H1 (cell line): ENCODE measurements at regions of chr4 and their contacts with region 1.

Region 1: DNA sequence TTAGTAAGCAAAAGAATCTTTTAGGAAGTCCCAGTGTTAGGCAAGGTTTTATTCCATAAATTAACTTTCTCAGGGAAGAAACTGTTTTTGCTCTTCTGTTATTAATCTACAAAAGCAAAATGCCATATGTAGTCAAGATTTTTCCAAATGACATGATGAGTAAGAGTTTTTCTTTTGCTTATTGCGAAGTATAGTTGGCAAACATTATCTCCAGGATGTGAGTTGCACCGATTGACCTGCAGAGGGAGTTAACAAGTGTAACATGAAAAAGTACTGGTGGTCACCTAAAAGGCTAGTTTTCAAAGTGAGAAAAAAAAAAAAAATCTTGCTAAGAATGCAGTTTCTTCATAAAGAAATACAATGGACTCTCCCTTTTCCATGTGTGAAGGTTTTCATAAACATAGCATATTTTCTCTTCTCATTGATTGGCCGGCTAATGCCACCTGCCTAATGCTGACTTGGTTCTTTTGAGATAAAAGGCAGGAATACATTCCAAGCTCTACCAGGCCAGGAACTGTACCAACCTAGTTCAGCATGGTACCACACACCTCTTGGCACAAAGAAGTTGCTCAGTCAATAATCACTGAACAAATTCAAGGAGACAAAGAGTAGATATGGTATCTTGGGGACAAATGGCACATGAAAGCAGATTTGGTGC is 100.2 kb downstream of the LNX1 start:
- DNase-seq: no peak
- H3K4me3 ChIP-seq: no peak overlapping the region
- H3K27ac ChIP-seq: no peak overlapping the region
- H3K4me1 ChIP-seq: peaks cover 0 to 3% (median 0%) of the 10 kb centered on the region in 4 experiments; a peak in 3 of 7 replicates
- H3K27me3 ChIP-seq: no peaks in the 10 kb centered on the region
- CTCF ChIP-seq: peak in 2 of 3 experiments; percentile 31 to 62; a peak in 2 of 4 replicates
- EP300 ChIP-seq: no peak
- POLR2A ChIP-seq: no peak
- RAD21 ChIP-seq: peak; percentile 50 to 65

Region 2: DNA sequence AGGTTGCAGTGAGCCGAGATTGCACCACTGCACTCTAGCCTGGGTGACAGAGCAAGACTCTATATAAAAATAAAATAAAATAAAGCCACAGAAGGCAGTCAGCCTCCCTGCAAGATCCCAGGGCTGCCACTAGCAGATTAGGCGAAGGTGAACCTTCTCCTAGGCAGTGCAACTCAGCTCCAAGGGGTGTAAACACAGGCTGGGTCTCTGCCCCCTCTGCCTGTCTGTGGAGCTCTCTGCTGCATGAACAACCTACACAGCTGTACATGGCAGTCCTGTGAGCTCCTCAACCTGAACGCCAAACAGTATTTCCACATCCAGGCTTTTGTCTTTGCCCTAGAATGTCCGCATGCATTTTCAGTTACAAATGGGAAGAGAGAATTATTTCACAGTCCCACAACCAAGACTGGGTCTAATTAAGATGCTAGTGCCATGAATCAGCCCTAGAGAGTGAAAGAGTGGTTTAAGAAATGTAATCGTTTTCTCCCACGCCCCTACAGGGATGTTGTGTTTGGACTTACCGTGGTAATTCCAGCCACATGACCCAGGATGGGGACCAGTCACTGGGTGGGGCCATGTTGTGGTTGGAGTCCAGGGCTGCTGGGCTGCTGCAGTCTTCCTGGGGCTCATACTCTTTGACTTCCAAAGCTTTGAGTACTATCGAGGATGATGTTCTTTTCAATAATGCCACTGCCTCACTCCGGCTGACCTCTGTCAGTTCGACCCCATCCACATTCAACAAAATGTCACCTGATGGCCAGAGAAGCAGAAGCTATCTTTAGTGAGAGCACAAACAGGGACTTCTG is 14.7 kb before region 1 on chr4:
- CTCF ChIA-PET with region 1: interaction called, 42 read pairs
- POLR2A ChIA-PET with region 1: interaction called, 3 read pairs
- DNase-seq: no peak
- H3K4me3 ChIP-seq: peak overlapping the region in 3 of 4 experiments; percentile 10 to 37 (median 23); a peak in 5 of 8 replicates
- H3K27ac ChIP-seq: peak overlapping the region; percentile 65
- H3K4me1 ChIP-seq: peaks cover 2 to 27% (median 23%) of the 10 kb centered on the region in 4 experiments; a peak in 5 of 7 replicates
- H3K27me3 ChIP-seq: no peaks in the 10 kb centered on the region
- CTCF ChIP-seq: no peak
- EP300 ChIP-seq: no peak
- POLR2A ChIP-seq: no peak
- RAD21 ChIP-seq: no peak

Region 3: DNA sequence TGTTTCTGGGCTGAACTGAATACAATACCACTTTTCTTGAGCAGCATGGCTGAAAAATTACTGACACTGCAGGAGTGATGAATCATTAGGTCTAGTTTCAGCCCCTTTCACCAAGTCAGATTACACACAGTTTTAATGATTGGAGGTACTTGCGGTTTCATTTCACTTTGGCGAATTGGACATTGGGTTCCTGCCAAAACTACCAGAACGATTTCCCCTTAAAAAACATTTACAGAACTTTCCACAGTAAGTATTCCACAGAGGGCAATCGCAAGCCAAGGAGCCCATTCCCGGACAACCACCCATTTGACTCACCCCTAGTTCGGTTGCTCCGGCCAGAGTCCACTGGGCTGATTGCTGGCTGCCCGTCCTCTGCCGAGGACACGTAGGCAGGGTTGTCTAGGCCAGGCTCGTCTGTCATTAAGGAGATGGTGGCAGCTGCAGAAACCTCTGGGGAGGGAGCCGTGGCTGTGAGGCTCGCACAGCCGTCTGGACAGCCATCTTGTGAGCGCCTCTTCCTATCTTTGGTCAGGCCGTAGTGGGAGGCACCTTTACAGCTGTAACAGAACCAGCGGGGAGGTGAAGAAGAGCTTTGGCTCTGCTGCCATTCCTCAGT is 16.7 kb after region 1 on chr4:
- CTCF ChIA-PET with region 1: interaction called, 54 read pairs
- POLR2A ChIA-PET with region 1: no interaction called
- DNase-seq: no peak
- H3K4me3 ChIP-seq: no peak overlapping the region
- H3K27ac ChIP-seq: no peak overlapping the region
- H3K4me1 ChIP-seq: no peaks in the 10 kb centered on the region
- H3K27me3 ChIP-seq: no peaks in the 10 kb centered on the region
- CTCF ChIP-seq: no peak
- EP300 ChIP-seq: no peak
- POLR2A ChIP-seq: no peak
- RAD21 ChIP-seq: no peak

Region 4: GRCh38 chr4:53601251-53601764 is 110.2 kb after region 1 on chr4:
- CTCF ChIA-PET with region 1: interaction called, 20 read pairs
- POLR2A ChIA-PET with region 1: no interaction called
- DNase-seq: peak; percentile 33 to 75
- H3K4me3 ChIP-seq: no peak overlapping the region
- H3K27ac ChIP-seq: no peak overlapping the region
- H3K4me1 ChIP-seq: peaks cover 0 to 4% (median 3%) of the 10 kb centered on the region in 4 experiments; a peak in 5 of 7 replicates
- H3K27me3 ChIP-seq: no peaks in the 10 kb centered on the region
- CTCF ChIP-seq: peak; percentile 63 to 81 (median 70)
- EP300 ChIP-seq: no peak
- POLR2A ChIP-seq: no peak
- RAD21 ChIP-seq: peak; percentile 65 to 78